ENCODE measurements at regions of chr17 and their contacts with region 1.

Region 1: GRCh38 chr17:29195465-29196081 is 15.4 kb upstream of the MYO18A start:
- DNase-seq: no peak

Region 2: GRCh38 chr17:28792877-28793661 is 402.5 kb before region 1 on chr17:
- CTCF ChIA-PET with region 1: interaction called, 11 read pairs
- POLR2A ChIA-PET with region 1: no interaction called
- DNase-seq: peak; percentile 16

Region 3: DNA sequence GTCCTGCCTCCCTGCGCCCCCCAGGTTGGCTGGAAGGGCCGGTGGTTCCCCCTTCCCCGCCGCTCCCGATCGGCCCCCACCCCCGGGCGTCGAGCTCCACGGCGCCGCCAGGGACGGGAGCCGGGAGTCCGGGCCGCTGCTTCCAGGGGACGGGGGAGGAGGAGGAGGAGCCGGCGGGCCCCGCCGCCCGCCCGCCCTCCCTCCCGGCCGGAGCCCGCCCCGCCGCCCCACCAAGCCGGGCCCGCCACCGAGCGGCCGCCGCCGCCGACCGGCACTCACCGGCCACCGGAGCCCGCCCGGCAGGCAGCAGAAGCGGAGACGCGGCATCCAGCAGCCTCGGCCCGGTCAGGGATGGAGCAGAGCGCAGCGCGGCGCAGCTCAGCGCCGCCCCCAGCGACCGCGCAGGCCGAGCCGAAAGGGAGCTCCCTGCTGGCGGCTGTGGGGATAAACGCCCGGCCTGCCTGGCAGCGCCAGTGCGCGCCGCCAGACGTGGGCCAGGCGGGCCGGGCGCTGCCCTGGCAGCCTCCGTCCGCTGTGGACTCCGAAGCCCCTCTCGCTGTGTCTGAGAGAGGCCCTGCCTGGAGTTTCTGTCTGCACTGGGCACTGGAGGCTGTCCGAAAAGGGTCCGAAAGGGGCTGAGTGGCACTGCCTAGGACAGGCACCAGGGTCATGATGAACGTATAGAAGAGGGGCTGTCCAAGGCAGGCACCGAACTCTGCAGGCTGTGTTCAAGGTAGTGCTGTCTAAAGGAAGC is 15.4 kb before region 1 on chr17 and contains the start of gene MYO18A:
- CTCF ChIA-PET with region 1: interaction called, 10 read pairs
- POLR2A ChIA-PET with region 1: interaction called, 10 read pairs
- DNase-seq: peak; percentile 82

Region 4: DNA sequence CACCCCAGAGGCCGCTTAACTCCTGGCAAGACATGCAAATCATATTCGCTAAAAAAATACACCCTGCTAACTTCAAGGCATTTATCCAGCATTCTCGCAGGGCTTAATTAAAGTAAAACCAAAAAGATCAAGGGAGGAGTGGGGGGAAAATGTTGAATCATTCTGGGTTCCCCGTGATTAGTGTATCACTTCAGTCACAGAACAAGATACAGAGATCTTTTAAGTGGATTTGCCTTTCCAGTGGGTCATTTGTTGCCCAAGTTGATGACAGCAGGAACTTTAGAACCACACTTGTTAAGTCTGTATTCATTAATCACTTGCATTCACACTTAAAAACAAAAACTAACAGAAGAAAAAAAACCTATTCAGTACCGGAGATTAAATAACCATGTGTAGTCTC is 68.3 kb after region 1 on chr17:
- CTCF ChIA-PET with region 1: no interaction called
- POLR2A ChIA-PET with region 1: no interaction called
- DNase-seq: no peak